ENCODE measurements at regions of chr12 and their contacts with region 1.

Region 1: DNA sequence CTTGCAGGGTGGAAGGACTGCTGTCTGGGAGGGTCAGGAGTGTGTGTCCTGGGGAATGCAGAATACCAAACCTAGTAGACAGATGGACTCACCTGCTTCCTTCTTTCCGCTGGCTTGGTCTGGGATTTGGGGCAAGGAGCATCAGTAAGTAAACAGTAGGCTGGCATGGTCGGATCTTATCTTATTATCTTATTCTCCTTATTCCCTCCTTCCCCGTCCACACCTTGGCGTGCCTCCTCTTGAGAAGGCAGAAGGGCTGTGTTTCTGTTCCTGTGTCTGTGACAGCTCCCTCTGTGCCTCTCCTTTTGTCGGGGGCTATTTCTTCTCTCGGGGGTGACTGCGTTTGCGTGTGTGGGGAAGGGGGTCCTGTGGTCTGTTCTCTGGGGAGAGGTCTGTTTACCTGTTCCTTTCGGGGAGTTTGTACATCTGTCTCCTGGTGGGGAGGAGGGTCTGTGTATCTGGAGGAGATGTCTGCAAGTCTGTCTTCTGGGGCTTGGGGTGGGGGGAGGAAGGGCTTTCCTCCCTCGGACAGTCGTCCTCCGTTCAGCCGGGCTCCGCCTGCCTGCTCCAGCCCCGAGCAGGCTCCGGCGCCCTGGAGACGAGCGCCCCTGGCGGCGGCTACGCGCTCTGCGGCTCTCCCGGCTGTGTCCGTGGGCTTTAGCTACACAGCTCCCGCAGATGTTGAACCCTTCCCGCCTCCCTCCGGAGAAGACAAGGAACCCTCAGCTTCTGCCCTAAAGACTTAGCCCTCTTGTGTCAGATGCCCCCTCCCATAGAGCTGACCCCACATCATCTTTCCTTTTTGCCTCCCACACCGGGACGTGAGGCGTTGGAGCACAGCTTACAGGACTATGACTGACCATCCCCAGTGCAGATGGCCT is 4.3 kb downstream of the KRT86 start:
- DNase-seq: peak; percentile 66
- H3K4me3 Mint-ChIP-seq: no peak overlapping the region
- H3K27ac Mint-ChIP-seq: no peak overlapping the region
- H3K4me1 Mint-ChIP-seq: peaks cover 11% of the 10 kb centered on the region
- H3K27me3 Mint-ChIP-seq: peaks cover 42% of the 10 kb centered on the region

Region 2: DNA sequence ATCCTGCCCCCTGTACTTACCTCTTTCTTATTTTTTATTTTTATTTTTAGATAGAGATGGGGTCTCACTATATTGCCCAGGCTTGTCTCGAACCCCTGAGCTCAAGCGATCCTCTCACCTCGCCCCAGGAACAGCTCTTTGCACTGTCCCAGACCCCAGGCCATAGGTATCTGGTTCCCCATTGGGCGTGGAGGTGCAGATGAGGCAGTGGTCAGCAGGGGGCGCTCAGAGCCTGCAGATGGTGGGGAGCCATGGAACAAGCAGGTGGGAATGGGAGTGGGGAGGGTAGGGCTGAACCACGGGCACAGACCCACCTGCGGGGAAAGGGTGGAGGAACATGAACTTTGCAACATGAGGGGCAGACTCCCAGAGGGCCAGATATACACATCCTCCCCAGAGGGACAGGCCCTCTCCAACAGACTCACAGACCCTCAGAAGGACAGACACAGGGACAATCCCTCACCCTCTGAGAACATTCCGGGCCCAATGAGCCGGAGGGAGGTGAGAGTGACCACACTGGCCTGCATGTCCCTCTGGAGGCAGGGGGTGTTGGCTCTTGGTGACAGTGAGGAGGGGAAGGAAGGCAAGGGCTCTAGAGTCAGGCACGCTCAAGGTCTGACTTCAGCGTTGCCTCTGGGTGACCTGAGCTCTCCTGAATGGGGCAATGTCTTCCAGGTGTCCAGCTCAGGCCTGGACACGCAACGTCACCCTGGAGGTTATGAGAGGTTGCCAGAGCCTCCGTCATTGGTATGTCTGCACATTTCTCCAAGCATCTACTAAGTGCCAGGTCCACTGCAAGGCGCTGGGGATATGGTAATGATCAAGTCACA is 121.8 kb before region 1 on chr12:
- CTCF ChIA-PET with region 1: interaction called, 12 read pairs
- POLR2A ChIA-PET with region 1: no interaction called
- DNase-seq: peak; percentile 76
- H3K4me3 Mint-ChIP-seq: no peak overlapping the region
- H3K27ac Mint-ChIP-seq: no peak overlapping the region
- H3K4me1 Mint-ChIP-seq: peaks cover 38% of the 10 kb centered on the region
- H3K27me3 Mint-ChIP-seq: no peaks in the 10 kb centered on the region

Region 3: GRCh38 chr12:52268212-52268611 is 10.6 kb before region 1 on chr12:
- CTCF ChIA-PET with region 1: interaction called, 19 read pairs
- POLR2A ChIA-PET with region 1: no interaction called
- DNase-seq: no peak
- H3K4me3 Mint-ChIP-seq: no peak overlapping the region
- H3K27ac Mint-ChIP-seq: no peak overlapping the region
- H3K4me1 Mint-ChIP-seq: no peaks in the 10 kb centered on the region
- H3K27me3 Mint-ChIP-seq: peaks cover 39% of the 10 kb centered on the region

Region 4: GRCh38 chr12:52295663-52296062 is 16.9 kb after region 1 on chr12:
- CTCF ChIA-PET with region 1: interaction called, 10 read pairs
- POLR2A ChIA-PET with region 1: no interaction called
- DNase-seq: no peak
- H3K4me3 Mint-ChIP-seq: no peak overlapping the region
- H3K27ac Mint-ChIP-seq: no peak overlapping the region
- H3K4me1 Mint-ChIP-seq: peaks cover 9% of the 10 kb centered on the region
- H3K27me3 Mint-ChIP-seq: peaks cover 63% of the 10 kb centered on the region

Region 5: DNA sequence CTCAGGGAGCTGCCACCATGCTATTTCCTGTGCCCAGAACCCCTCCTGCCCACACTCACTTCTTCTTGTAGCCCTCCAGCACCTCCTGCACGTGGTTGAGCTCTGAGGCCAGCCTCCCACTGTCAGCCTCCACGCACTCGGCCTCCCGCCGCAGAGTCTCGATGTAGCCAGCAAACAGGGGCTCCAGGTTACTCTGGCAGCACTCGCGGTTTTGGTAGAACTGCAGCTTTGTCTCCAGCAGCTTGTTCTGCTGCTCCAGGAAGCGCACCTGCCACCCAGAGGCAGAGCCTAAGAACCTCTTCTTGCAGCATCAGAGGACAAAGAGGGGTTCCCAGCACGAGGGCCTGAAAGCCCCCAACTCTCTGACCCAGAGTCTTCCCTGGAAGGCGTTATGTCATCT is 40.3 kb after region 1 on chr12:
- CTCF ChIA-PET with region 1: no interaction called
- POLR2A ChIA-PET with region 1: no interaction called
- DNase-seq: no peak
- H3K4me3 Mint-ChIP-seq: no peak overlapping the region
- H3K27ac Mint-ChIP-seq: no peak overlapping the region
- H3K4me1 Mint-ChIP-seq: no peaks in the 10 kb centered on the region
- H3K27me3 Mint-ChIP-seq: peaks cover 23% of the 10 kb centered on the region

Measured in activated CD4-positive, alpha-beta T cell treated with anti-CD3 and anti-CD28 coated beads, Interleukin-2, amount 10 ng/mL, durations not matched to agents 7 days and 5 days (primary cell).